ENCODE measurements at regions of chr4 and their contacts with region 1.

Region 1: DNA sequence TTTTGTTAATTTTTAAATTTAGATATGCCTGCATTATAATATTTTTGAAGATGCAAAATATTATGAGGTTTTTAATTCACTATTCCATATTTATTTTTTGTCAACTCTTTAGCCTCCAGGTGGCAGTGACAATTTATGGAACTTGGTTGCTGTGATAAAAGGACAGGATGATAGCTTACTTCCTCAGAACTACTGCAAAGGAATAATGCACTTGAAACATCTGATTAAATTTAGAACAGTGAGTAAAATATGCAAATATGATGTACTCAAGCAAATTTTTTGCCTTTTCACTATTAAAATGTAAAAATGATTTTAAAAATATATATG is 45.1 kb downstream of the SPATA4 start:
- DNase-seq: peak; percentile 46
- ATAC-seq: peak; percentile 66
- H3K4me3 ChIP-seq: no peak overlapping the region
- H3K27ac ChIP-seq: no peak overlapping the region
- H3K4me1 ChIP-seq: no peaks in the 10 kb centered on the region
- H3K27me3 ChIP-seq: no peaks in the 10 kb centered on the region
- CTCF ChIP-seq: peak; percentile 46
- POLR2A ChIP-seq: no peak
- RAD21 ChIP-seq: peak; percentile 58

Region 2: DNA sequence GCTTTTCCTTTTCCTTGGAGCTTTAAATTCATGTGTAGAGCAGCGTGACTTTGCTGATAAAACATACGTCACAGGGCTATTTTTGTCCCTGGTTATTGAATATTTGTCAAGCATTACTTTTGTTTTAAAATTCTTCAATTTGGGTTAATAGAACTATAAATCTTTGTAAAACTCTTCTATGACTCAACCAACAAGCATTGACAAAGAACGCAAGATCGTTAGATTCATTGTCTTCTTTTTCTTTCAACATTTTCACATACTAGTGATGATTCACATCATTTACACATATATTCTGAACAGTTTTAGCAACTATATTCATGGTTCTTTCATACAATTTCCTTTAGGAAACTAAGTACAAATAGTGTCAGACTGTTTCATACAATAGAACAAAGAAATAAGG is 266.3 kb before region 1 on chr4:
- CTCF ChIA-PET with region 1: no interaction called
- POLR2A ChIA-PET with region 1: no interaction called
- dilution Hi-C with region 1: no loop called
- in situ Hi-C with region 1: no loop called
- intact Hi-C with region 1: no loop called
- DNase-seq: no peak
- ATAC-seq: no peak
- H3K4me3 ChIP-seq: no peak overlapping the region
- H3K27ac ChIP-seq: no peak overlapping the region
- H3K4me1 ChIP-seq: no peaks in the 10 kb centered on the region
- H3K27me3 ChIP-seq: no peaks in the 10 kb centered on the region
- CTCF ChIP-seq: no peak
- POLR2A ChIP-seq: no peak
- RAD21 ChIP-seq: no peak

Region 3: GRCh38 chr4:176185067-176185466 is 34.7 kb after region 1 on chr4:
- CTCF ChIA-PET with region 1: no interaction called
- POLR2A ChIA-PET with region 1: no interaction called
- dilution Hi-C with region 1: no loop called
- in situ Hi-C with region 1: no loop called
- intact Hi-C with region 1: loop called (anchors 5 kb)
- DNase-seq: peak; percentile 92
- ATAC-seq: peak; percentile 98
- H3K4me3 ChIP-seq: no peak overlapping the region
- H3K27ac ChIP-seq: no peak overlapping the region
- H3K4me1 ChIP-seq: peaks cover 9% of the 10 kb centered on the region; the same call in 1 of the 2 replicates
- H3K27me3 ChIP-seq: no peaks in the 10 kb centered on the region
- CTCF ChIP-seq: no peak
- POLR2A ChIP-seq: no peak
- RAD21 ChIP-seq: no peak

Region 4: GRCh38 chr4:176671532-176671931 is 521.2 kb after region 1 on chr4:
- CTCF ChIA-PET with region 1: no interaction called
- POLR2A ChIA-PET with region 1: no interaction called
- dilution Hi-C with region 1: no loop called
- in situ Hi-C with region 1: no loop called
- intact Hi-C with region 1: no loop called
- DNase-seq: peak; percentile 44
- ATAC-seq: peak; percentile 51
- H3K4me3 ChIP-seq: no peak overlapping the region
- H3K27ac ChIP-seq: 0 out of 2 replicates have a peak overlapping the region, but pooled peaks have one; percentile 29
- H3K4me1 ChIP-seq: no peaks in the 10 kb centered on the region
- H3K27me3 ChIP-seq: no peaks in the 10 kb centered on the region
- CTCF ChIP-seq: no peak
- POLR2A ChIP-seq: no peak
- RAD21 ChIP-seq: no peak

Measured in IMR-90 (cell line).